CD8-positive, alpha-beta memory T cell (primary cell): ENCODE measurements at regions of chr5 and their contacts with region 1.

Region 1: GRCh38 chr5:157142317-157143126 is at the start of gene MED7:
- DNase-seq: peak; percentile 85 to 97 (median 95)
- H3K4me3 ChIP-seq: peak within 1 kb of the TSS; percentile 84
- H3K4me3 Mint-ChIP-seq: peak within 1 kb of the TSS; percentile 89 to 100 (median 97)
- H3K27ac ChIP-seq: peak within 1 kb of the TSS; percentile 92
- H3K27ac Mint-ChIP-seq: peak within 1 kb of the TSS; percentile 93 to 100 (median 98)
- H3K4me1 ChIP-seq: peaks cover 23% of the 10 kb centered on the region
- H3K4me1 Mint-ChIP-seq: peaks cover 32 to 54% (median 49%) of the 10 kb centered on the region in 3 donors
- H3K27me3 ChIP-seq: no peaks in the 10 kb centered on the region
- H3K27me3 Mint-ChIP-seq: no peaks in the 10 kb centered on the region
- total RNA-seq, gene MED7: 12.6 to 14.7 TPM

Region 2: GRCh38 chr5:157108976-157109375 is 33.5 kb before region 1 on chr5 and contains the start of gene HAVCR2:
- CTCF ChIA-PET with region 1: no interaction called
- POLR2A ChIA-PET with region 1: interaction called, 12 read pairs
- DNase-seq: peak; percentile 6 to 58 (median 53)
- H3K4me3 ChIP-seq: peak within 1 kb of the TSS; percentile 62
- H3K4me3 Mint-ChIP-seq: peak within 1 kb of the TSS; percentile 53 to 83 (median 80)
- H3K27ac ChIP-seq: peak within 1 kb of the TSS; percentile 34
- H3K27ac Mint-ChIP-seq: peak within 1 kb of the TSS; percentile 59 to 96 (median 92)
- H3K4me1 ChIP-seq: peaks cover 23% of the 10 kb centered on the region
- H3K4me1 Mint-ChIP-seq: peaks cover 29 to 40% (median 36%) of the 10 kb centered on the region in 3 donors
- H3K27me3 ChIP-seq: no peaks in the 10 kb centered on the region
- H3K27me3 Mint-ChIP-seq: no peaks in the 10 kb centered on the region
- total RNA-seq, gene HAVCR2: 6.3 to 6.6 TPM

Region 3: DNA sequence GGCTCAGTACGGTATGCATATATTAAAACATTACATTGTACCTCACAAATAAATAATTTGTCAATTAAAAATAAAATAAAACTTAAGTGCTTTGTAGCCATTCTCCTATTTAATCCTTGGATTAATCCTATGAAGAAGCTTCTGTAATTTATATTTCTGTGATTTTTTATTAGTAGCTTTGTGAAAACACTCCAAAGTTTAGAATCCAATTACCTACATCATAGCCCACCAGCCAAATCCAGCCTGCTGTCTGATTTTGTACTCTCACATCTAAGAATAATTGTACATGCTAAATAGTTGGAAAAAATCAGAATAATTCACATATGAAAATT is 10.3 kb before region 1 on chr5:
- CTCF ChIA-PET with region 1: interaction called, 11 read pairs
- POLR2A ChIA-PET with region 1: interaction called, 3 read pairs
- DNase-seq: no peak
- H3K4me3 ChIP-seq: no peak overlapping the region
- H3K4me3 Mint-ChIP-seq: no peak overlapping the region
- H3K27ac ChIP-seq: no peak overlapping the region
- H3K27ac Mint-ChIP-seq: no peak overlapping the region
- H3K4me1 ChIP-seq: no peaks in the 10 kb centered on the region
- H3K4me1 Mint-ChIP-seq: peaks cover 6 to 23% (median 10%) of the 10 kb centered on the region in 3 donors
- H3K27me3 ChIP-seq: no peaks in the 10 kb centered on the region
- H3K27me3 Mint-ChIP-seq: peaks cover 0 to 3% of the 10 kb centered on the region in 2 donors

Region 4: GRCh38 chr5:157180374-157181264 is 38.1 kb after region 1 on chr5 and contains the start of gene ITK:
- CTCF ChIA-PET with region 1: interaction called, 46 read pairs
- POLR2A ChIA-PET with region 1: interaction called, 11 read pairs
- DNase-seq: peak in 4 of 5 donors; percentile 25 to 80 (median 73)
- H3K4me3 ChIP-seq: peak within 1 kb of the TSS; percentile 84
- H3K4me3 Mint-ChIP-seq: peak within 1 kb of the TSS; percentile 93 to 100 (median 97)
- H3K27ac ChIP-seq: peak within 1 kb of the TSS; percentile 79
- H3K27ac Mint-ChIP-seq: peak within 1 kb of the TSS; percentile 87 to 99 (median 97)
- H3K4me1 ChIP-seq: peaks cover 45% of the 10 kb centered on the region
- H3K4me1 Mint-ChIP-seq: peaks cover 54 to 64% (median 55%) of the 10 kb centered on the region in 3 donors
- H3K27me3 ChIP-seq: no peaks in the 10 kb centered on the region
- H3K27me3 Mint-ChIP-seq: no peaks in the 10 kb centered on the region
- total RNA-seq, gene ITK: 150 to 162 TPM

Region 5: GRCh38 chr5:157271740-157272271 is 129.3 kb after region 1 on chr5:
- CTCF ChIA-PET with region 1: interaction called, 13 read pairs
- POLR2A ChIA-PET with region 1: interaction called, 25 read pairs
- DNase-seq: peak; percentile 71 to 95 (median 94)
- H3K4me3 ChIP-seq: peak overlapping the region; percentile 33
- H3K4me3 Mint-ChIP-seq: peak overlapping the region; percentile 74 to 89 (median 79)
- H3K27ac ChIP-seq: peak overlapping the region; percentile 57
- H3K27ac Mint-ChIP-seq: peak overlapping the region; percentile 96 to 99 (median 98)
- H3K4me1 ChIP-seq: peaks cover 94% of the 10 kb centered on the region
- H3K4me1 Mint-ChIP-seq: peaks cover 92 to 98% (median 95%) of the 10 kb centered on the region in 3 donors
- H3K27me3 ChIP-seq: no peaks in the 10 kb centered on the region
- H3K27me3 Mint-ChIP-seq: no peaks in the 10 kb centered on the region